MCF 10A (cell line): ENCODE measurements at regions of chr17 and their contacts with region 1.

Region 1: GRCh38 chr17:82876602-82877379 is 37.0 kb upstream of the ZNF750 start:
- DNase-seq: peak; percentile 84
- H3K4me3 Mint-ChIP-seq: peak overlapping the region; percentile 69
- H3K27ac Mint-ChIP-seq: peak overlapping the region; percentile 97
- H3K4me1 Mint-ChIP-seq: peaks cover 26% of the 10 kb centered on the region
- H3K27me3 Mint-ChIP-seq: no peaks in the 10 kb centered on the region
- CTCF ChIP-seq: peak; percentile 33

Region 2: GRCh38 chr17:82781894-82782274 is 94.9 kb before region 1 on chr17:
- CTCF ChIA-PET with region 1: interaction called, 3 read pairs
- POLR2A ChIA-PET with region 1: interaction called, 52 read pairs
- intact Hi-C with region 1: loop called (anchors 1 kb)
- DNase-seq: peak; percentile 81
- H3K4me3 Mint-ChIP-seq: no peak overlapping the region
- H3K27ac Mint-ChIP-seq: no peak overlapping the region
- H3K4me1 Mint-ChIP-seq: peaks cover 8% of the 10 kb centered on the region
- H3K27me3 Mint-ChIP-seq: no peaks in the 10 kb centered on the region
- CTCF ChIP-seq: peak; percentile 98

Region 3: GRCh38 chr17:82787081-82787848 is 89.5 kb before region 1 on chr17:
- CTCF ChIA-PET with region 1: interaction called, 3 read pairs
- POLR2A ChIA-PET with region 1: interaction called, 52 read pairs
- intact Hi-C with region 1: loop called (anchors 1 kb)
- DNase-seq: peak; percentile 98
- H3K4me3 Mint-ChIP-seq: peak overlapping the region; percentile 51
- H3K27ac Mint-ChIP-seq: peak overlapping the region; percentile 81
- H3K4me1 Mint-ChIP-seq: peaks cover 33% of the 10 kb centered on the region
- H3K27me3 Mint-ChIP-seq: no peaks in the 10 kb centered on the region
- CTCF ChIP-seq: no peak

Region 4: GRCh38 chr17:82807101-82807500 is 69.7 kb before region 1 on chr17:
- CTCF ChIA-PET with region 1: no interaction called
- POLR2A ChIA-PET with region 1: no interaction called
- intact Hi-C with region 1: no loop called
- DNase-seq: no peak
- H3K4me3 Mint-ChIP-seq: no peak overlapping the region
- H3K27ac Mint-ChIP-seq: no peak overlapping the region
- H3K4me1 Mint-ChIP-seq: no peaks in the 10 kb centered on the region
- H3K27me3 Mint-ChIP-seq: no peaks in the 10 kb centered on the region
- CTCF ChIP-seq: no peak

Region 5: GRCh38 chr17:82836823-82837357 is 39.9 kb before region 1 on chr17:
- CTCF ChIA-PET with region 1: interaction called, 28 read pairs
- POLR2A ChIA-PET with region 1: interaction called, 162 read pairs
- intact Hi-C with region 1: no loop called
- DNase-seq: no peak
- H3K4me3 Mint-ChIP-seq: peak overlapping the region; percentile 16
- H3K27ac Mint-ChIP-seq: peak overlapping the region; percentile 85
- H3K4me1 Mint-ChIP-seq: peaks cover 17% of the 10 kb centered on the region
- H3K27me3 Mint-ChIP-seq: no peaks in the 10 kb centered on the region
- CTCF ChIP-seq: no peak

Region 6: GRCh38 chr17:82848022-82848592 is 28.7 kb before region 1 on chr17:
- CTCF ChIA-PET with region 1: interaction called, 6 read pairs
- POLR2A ChIA-PET with region 1: interaction called, 17 read pairs
- intact Hi-C with region 1: no loop called
- DNase-seq: peak; percentile 90
- H3K4me3 Mint-ChIP-seq: peak overlapping the region; percentile 65
- H3K27ac Mint-ChIP-seq: peak overlapping the region; percentile 46
- H3K4me1 Mint-ChIP-seq: peaks cover 5% of the 10 kb centered on the region
- H3K27me3 Mint-ChIP-seq: no peaks in the 10 kb centered on the region
- CTCF ChIP-seq: no peak

Region 7: GRCh38 chr17:82858352-82859126 is 18.3 kb before region 1 on chr17:
- CTCF ChIA-PET with region 1: interaction called, 12 read pairs
- POLR2A ChIA-PET with region 1: interaction called, 18 read pairs
- intact Hi-C with region 1: no loop called
- DNase-seq: no peak
- H3K4me3 Mint-ChIP-seq: no peak overlapping the region
- H3K27ac Mint-ChIP-seq: peak overlapping the region; percentile 23
- H3K4me1 Mint-ChIP-seq: peaks cover 16% of the 10 kb centered on the region
- H3K27me3 Mint-ChIP-seq: no peaks in the 10 kb centered on the region
- CTCF ChIP-seq: no peak

Region 8: GRCh38 chr17:82863941-82864774 is 12.6 kb before region 1 on chr17:
- CTCF ChIA-PET with region 1: interaction called, 12 read pairs
- POLR2A ChIA-PET with region 1: interaction called, 18 read pairs
- intact Hi-C with region 1: no loop called
- DNase-seq: peak; percentile 58
- H3K4me3 Mint-ChIP-seq: no peak overlapping the region
- H3K27ac Mint-ChIP-seq: no peak overlapping the region
- H3K4me1 Mint-ChIP-seq: peaks cover 10% of the 10 kb centered on the region
- H3K27me3 Mint-ChIP-seq: no peaks in the 10 kb centered on the region
- CTCF ChIP-seq: no peak